ENCODE measurements at regions of chr4 and their contacts with region 1.

Region 1: GRCh38 chr4:38190717-38191178 is 230.6 kb downstream of the PTTG2 start:
- DNase-seq: peak in 1 of 2 donors; percentile 90
- H3K4me3 ChIP-seq: no peak overlapping the region
- H3K27ac ChIP-seq: peak overlapping the region; percentile 81 to 83
- H3K4me1 ChIP-seq: peaks cover 14 to 35% of the 10 kb centered on the region in 2 donors
- H3K27me3 ChIP-seq: no peaks in the 10 kb centered on the region
- CTCF ChIP-seq: no peak

Region 2: GRCh38 chr4:37864786-37865185 is 326.0 kb before region 1 on chr4:
- intact Hi-C with region 1: no loop called
- DNase-seq: no peak
- H3K4me3 ChIP-seq: no peak overlapping the region
- H3K27ac ChIP-seq: no peak overlapping the region
- H3K4me1 ChIP-seq: no peaks in the 10 kb centered on the region
- H3K27me3 ChIP-seq: no peaks in the 10 kb centered on the region
- CTCF ChIP-seq: no peak

Region 3: DNA sequence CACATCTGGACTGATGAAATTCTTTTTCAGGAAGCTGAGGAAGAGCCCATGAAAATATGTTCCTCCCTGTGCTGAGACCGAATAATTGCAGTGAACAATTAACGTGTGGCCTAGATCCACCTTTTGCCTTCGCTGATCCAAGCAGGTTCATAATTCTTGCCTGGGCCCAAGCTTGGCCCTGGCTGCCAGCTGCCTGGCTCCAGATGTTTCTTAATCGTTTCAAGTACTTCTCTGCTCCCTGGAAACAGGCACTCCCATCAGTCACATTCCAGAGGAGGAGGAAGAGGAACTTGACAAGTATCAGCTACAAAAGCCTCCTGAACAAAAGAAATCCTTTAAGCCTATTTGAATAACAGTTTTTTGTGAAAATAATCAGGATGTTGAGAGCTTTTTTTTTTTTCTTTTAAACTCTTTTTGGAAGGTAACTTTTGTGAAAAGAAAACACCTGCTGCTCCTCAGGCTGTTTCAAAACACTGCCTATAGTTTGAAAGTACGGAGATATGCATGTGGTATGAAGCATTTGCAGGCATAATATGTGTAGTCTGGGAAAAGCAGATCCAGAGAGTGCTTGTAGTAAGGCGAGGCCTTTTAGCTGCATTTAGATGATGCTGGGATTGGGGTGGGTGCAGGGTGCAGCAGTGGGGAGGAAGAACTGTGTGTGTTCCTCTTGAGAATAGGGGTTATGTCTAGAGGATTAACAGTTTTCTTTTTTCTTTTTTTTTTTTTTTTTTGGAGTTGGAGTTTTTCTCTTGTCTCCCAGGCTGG is 76.2 kb before region 1 on chr4:
- intact Hi-C with region 1: no loop called
- DNase-seq: no peak
- H3K4me3 ChIP-seq: no peak overlapping the region
- H3K27ac ChIP-seq: no peak overlapping the region
- H3K4me1 ChIP-seq: no peaks in the 10 kb centered on the region
- H3K27me3 ChIP-seq: no peaks in the 10 kb centered on the region
- CTCF ChIP-seq: no peak

Region 4: DNA sequence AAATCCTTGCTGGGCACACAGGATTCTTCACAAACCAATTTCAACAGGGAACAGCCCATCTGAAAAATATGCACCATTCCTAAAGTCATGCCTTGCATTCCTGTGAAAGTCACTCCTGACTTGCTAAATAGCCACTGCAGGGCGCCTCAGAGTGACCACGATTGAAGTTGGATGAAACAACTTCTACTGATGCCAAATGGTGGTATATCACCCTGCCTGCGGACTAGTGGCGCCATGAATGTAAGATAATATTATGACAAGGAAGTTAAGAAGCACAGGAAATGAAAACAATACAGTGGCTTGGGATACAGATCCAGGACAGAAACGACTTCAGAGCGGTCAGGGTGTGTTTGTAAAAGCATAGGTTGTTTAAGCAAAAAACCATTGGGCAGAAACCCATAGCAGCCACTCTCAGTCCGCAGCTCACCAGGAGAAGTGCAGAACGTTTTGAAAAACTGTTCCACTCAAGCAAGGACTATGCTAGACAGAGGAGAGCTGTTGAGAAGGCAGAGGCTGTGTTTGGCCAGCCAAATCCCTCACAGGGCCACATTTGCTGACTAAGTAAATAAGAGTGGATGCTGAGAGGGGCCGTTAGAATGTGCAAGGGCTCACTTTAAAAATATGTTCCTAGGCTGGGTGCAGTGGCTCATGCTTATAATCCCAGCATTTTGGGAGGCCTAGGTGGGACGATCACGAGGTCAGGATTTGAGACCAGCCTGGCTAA is 19.8 kb after region 1 on chr4:
- intact Hi-C with region 1: loop called (anchors 1 kb)
- DNase-seq: peak in 1 of 2 donors; percentile 72
- H3K4me3 ChIP-seq: peak overlapping the region in 1 of 2 donors; percentile 21
- H3K27ac ChIP-seq: peak overlapping the region; percentile 76 to 89
- H3K4me1 ChIP-seq: peaks cover 0 to 17% of the 10 kb centered on the region in 2 donors
- H3K27me3 ChIP-seq: no peaks in the 10 kb centered on the region
- CTCF ChIP-seq: no peak

Region 5: DNA sequence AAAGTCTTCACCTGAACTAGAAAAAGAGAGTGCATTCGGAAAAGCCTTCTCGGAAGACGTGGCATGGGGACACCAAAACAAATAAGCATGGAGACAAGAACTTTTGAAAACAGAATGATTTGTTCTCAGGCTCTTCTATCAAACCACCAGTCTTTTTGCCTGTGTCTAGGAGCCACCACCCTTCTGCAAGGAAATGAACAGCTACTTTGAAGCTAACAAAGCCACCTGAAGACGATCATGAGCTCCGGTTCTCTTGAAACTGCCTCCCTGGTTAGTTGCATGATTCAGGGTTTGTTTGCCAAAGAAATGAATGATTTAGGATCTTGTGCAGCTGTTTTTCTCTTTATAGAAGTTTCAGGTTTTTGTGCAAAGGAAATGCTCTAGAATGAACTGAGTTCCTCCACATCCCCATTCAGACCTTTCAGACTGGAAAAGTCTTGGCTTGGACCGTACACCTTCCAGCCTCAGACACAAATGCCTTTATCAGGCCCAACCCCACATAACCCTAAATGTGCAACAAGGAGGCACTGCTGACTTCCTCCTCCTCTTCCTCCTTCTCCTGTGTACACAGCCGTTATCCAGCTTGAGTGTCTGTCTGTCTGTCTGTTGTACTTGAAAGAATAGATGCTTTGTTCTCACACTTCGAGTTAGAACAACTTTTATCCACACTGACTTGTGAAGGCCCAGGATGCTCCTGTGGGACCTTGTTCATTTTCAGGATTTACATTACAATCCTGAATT is 138.4 kb after region 1 on chr4:
- intact Hi-C with region 1: no loop called
- DNase-seq: no peak
- H3K4me3 ChIP-seq: no peak overlapping the region
- H3K27ac ChIP-seq: no peak overlapping the region
- H3K4me1 ChIP-seq: no peaks in the 10 kb centered on the region
- H3K27me3 ChIP-seq: no peaks in the 10 kb centered on the region
- CTCF ChIP-seq: no peak

Region 6: GRCh38 chr4:38343608-38344007 is 152.9 kb after region 1 on chr4:
- intact Hi-C with region 1: no loop called
- DNase-seq: no peak
- H3K4me3 ChIP-seq: no peak overlapping the region
- H3K27ac ChIP-seq: no peak overlapping the region
- H3K4me1 ChIP-seq: no peaks in the 10 kb centered on the region
- H3K27me3 ChIP-seq: no peaks in the 10 kb centered on the region
- CTCF ChIP-seq: no peak

Region 7: GRCh38 chr4:38366456-38366855 is 175.7 kb after region 1 on chr4:
- intact Hi-C with region 1: loop called (anchors 5 kb)
- DNase-seq: peak in 1 of 2 donors; percentile 82
- H3K4me3 ChIP-seq: no peak overlapping the region
- H3K27ac ChIP-seq: peak overlapping the region; percentile 68 to 74
- H3K4me1 ChIP-seq: peaks cover 0 to 29% of the 10 kb centered on the region in 2 donors
- H3K27me3 ChIP-seq: no peaks in the 10 kb centered on the region
- CTCF ChIP-seq: no peak

Measured in ascending aorta (tissue), 2 donors.